ENCODE measurements at regions of chr6 and their contacts with region 1.

Region 1: DNA sequence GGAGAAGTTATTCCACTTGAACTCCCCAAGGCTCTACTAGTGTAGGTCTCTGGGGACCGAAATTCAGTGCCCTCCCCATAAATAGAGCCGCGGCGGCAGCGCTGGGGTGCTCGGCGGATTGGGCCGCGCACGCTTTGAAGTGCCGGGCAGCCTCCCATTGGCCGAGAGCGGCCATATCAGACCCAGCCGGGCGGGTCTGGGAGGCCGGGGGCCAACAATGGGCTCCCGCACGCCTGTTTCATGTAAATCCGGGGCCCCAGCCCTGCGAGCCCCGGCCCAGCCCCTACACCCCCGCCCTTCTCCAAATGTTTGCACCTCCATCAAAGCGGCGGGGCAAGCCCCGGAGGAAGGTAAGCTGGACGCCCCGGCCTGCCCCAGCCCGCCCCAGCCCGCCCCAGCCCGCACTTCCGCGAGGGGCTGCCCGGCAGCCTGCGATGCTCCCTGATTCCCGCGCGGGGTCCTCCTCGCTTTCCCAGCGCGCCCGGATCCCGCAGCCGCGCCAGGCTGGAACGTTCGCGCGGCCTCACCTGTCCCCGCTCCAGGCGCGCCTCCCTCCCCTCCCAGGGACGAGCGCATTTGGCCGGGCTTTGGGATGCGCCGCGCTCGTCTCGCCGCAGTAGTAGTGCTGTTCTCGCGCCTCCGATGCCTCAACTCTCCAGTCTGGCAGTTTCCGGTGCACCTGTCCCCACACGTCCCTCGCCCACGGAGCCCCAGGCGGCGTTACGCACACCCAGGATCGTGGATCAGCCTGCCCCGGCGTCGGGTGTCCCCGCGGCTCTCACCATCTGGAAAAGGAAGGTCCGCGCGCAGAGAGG is at the start of gene TBXT:
- DNase-seq: peak; percentile 64
- H3K4me3 ChIP-seq: peak within 1 kb of the TSS; percentile 72
- H3K27ac ChIP-seq: no peak within 1 kb of the TSS
- H3K4me1 ChIP-seq: peaks cover 20% of the 10 kb centered on the region
- CTCF ChIP-seq: 0 out of 2 replicates have a peak, but pooled peaks have one; percentile 22
- total RNA-seq, gene TBXT: 0.44 and 1.0 TPM in 2 replicates

Region 2: GRCh38 chr6:166106076-166106686 is 61.8 kb before region 1 on chr6:
- CTCF ChIA-PET with region 1: no interaction called
- POLR2A ChIA-PET with region 1: no interaction called
- intact Hi-C with region 1: no loop called
- DNase-seq: peak; percentile 76
- H3K4me3 ChIP-seq: no peak overlapping the region
- H3K27ac ChIP-seq: no peak overlapping the region
- H3K4me1 ChIP-seq: peaks cover 4% of the 10 kb centered on the region
- CTCF ChIP-seq: peak; percentile 98

Region 3: GRCh38 chr6:166228839-166229528 is 61.0 kb after region 1 on chr6:
- CTCF ChIA-PET with region 1: interaction called, 3 read pairs
- POLR2A ChIA-PET with region 1: interaction called, 4 read pairs
- intact Hi-C with region 1: loop called (anchors 2 kb)
- DNase-seq: peak; percentile 81
- H3K4me3 ChIP-seq: peak overlapping the region; percentile 45
- H3K27ac ChIP-seq: peak overlapping the region; percentile 68
- H3K4me1 ChIP-seq: peaks cover 45% of the 10 kb centered on the region
- CTCF ChIP-seq: no peak

Measured in OCI-LY7 (cell line).